Activated CD4-positive, alpha-beta T cell treated with anti-CD3 and anti-CD28 coated beads, Interleukin-2, amount 10 ng/mL, durations not matched to agents 24 days and 14 days (primary cell): ENCODE measurements at regions of chr7 and their contacts with region 1.

Region 1: DNA sequence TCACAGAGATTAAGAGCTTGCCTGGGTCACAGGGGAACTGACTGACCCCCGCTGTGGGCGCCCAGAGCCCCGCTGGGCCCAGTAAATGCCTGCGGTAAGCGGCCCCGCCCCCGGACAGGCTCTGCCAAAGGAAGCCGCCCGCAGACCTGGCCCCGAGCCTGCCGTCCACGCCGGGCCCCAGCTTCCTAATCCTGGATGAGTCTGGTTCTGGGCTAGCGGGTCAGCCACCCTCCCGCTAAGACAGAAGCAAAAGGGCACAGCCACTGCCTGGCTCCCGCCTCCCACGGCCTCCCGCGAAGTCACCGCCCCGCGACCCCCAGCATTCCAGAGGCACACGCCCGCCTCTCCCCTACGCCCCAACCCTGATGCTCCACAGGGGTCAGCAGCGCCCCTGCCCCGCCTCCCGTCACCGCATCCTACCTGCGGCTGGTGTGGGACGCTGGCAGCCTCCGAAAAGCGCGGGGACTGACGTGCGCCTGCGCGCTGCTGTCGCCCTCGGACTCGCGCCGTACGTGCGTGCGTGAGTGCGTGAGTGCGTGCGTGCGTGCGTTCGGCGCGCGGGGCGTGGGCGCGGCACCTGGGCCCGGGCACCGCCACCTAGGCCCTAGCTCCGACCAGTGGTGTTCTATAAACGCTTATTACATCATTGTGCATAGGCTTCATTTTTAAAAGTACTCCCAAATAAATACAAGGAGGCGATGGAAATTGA is at the start of gene FIGNL1:
- DNase-seq: peak; percentile 96
- H3K4me3 Mint-ChIP-seq: peak within 1 kb of the TSS; percentile 95
- H3K27ac Mint-ChIP-seq: peak within 1 kb of the TSS; percentile 80
- H3K4me1 Mint-ChIP-seq: peaks cover 39% of the 10 kb centered on the region
- H3K27me3 Mint-ChIP-seq: peaks cover 7% of the 10 kb centered on the region
- total RNA-seq, gene FIGNL1: 44.7 and 47.4 TPM in 2 replicates

Region 2: DNA sequence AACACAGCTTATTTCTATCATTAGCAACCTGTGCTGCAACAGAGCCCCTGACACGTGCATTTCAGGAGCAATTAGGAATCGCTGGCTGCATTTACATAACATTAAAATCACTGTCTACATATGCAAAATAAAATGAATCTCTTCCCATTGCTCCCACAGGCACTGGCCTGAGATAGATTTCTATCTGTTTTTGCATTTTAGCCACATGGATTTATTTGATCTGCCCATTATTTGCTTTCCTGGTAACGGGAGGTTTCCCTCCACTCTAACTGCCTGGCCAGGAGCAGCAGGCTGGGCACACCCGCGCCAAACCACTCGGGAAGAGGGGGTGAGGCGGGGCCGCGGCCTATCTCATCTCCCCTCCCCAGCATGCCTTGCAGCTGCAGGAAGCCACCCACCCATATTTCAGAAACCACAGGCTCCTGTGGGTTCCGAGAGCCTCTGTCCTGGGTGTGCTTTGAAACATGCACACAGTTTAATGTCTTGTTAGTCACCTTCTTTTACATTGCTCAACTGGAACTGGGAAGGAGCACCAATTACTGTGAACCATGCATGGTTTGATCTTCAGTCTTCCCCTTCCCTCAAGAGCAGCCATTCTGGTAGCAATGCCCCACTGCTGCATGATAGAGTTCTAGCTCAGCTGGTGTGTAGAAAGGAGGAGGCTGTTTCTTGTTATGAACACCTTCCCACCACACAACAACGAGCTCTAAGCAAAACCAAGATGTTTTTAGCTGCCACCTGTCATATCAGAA is 183.2 kb before region 1 on chr7:
- intact Hi-C with region 1: loop called (anchors 5 kb)
- DNase-seq: peak; percentile 95
- H3K4me3 Mint-ChIP-seq: peak overlapping the region; percentile 86
- H3K27ac Mint-ChIP-seq: peak overlapping the region; percentile 95
- H3K4me1 Mint-ChIP-seq: peaks cover 84% of the 10 kb centered on the region
- H3K27me3 Mint-ChIP-seq: no peaks in the 10 kb centered on the region

Region 3: DNA sequence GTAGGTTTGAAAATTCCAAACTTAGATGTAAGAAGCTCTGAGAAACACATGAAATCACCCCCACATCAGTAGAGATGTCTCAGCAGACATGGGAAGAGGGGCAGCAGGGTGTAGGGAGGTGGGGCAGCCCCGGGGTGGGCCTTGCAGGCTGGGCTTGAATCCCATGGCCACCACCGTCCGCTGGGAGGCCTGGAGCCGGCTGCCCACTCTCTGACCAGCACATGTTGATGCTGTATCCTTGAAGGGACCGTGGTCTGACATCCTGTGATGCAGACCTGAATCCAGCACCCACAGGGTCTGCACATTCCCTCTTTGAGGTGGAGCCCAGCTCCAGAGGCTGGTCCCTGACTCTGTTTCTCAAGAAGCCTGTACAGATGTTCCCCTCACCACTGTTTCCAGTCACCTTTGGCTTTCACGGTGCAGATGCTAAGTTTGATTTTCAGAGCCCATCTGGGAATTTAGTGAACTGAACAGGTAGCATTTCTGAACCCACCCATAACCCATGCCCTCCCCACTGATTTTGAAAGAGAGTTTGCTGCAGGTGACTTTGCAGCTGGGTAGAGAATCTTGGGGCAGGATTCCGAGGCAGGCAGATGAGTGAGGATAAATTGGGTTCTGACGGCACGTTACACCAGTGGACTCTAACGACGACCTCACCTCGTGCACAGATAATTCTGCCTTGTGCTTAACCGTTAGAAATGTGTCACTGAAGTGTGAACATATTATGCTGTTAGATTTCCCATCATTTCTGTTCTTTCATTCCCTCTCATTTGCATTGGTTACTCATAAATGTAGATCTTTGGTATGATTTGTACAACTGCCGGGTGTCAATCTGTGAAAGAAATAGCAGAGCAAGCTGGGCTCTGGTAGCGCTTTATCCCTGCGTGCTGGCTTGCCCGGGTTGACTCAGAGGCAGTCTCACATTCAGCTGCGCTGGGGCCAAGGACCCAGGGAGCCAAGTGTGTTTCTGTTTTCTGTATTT is 99.8 kb before region 1 on chr7:
- intact Hi-C with region 1: loop called (anchors 5 kb)
- DNase-seq: peak; percentile 92
- H3K4me3 Mint-ChIP-seq: peak overlapping the region; percentile 76
- H3K27ac Mint-ChIP-seq: peak overlapping the region; percentile 95
- H3K4me1 Mint-ChIP-seq: peaks cover 95% of the 10 kb centered on the region
- H3K27me3 Mint-ChIP-seq: no peaks in the 10 kb centered on the region

Region 4: GRCh38 chr7:50467817-50468610 is 18.0 kb after region 1 on chr7:
- intact Hi-C with region 1: loop called (anchors 2 kb)
- DNase-seq: peak; percentile 94
- H3K4me3 Mint-ChIP-seq: peak overlapping the region; percentile 54
- H3K27ac Mint-ChIP-seq: peak overlapping the region; percentile 62
- H3K4me1 Mint-ChIP-seq: peaks cover 10% of the 10 kb centered on the region
- H3K27me3 Mint-ChIP-seq: peaks cover 18% of the 10 kb centered on the region

Region 5: DNA sequence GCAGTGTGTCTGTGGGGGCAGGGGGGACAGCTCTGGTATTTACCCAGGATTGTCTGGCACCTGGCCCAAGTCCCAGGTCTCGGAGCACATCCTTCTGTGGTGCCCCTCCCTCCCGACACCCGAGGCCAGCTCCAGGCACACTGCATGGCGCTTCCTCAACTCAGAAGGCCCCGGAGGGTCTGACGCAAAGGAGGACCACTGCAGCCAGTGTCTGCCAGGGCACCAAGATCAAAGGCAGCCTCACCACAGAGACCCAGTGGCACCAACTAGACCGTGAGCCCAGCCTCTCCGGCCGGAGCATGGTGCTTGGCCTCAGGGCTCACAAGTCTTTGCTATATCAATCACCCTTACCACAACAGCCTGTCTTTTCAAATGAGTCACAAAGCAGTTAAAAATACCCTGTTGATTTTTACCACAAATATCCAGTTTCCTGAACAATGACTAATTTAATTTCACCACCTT is 214.5 kb after region 1 on chr7:
- intact Hi-C with region 1: loop called (anchors 5 kb)
- DNase-seq: peak; percentile 68
- H3K4me3 Mint-ChIP-seq: no peak overlapping the region
- H3K27ac Mint-ChIP-seq: no peak overlapping the region
- H3K4me1 Mint-ChIP-seq: peaks cover 46% of the 10 kb centered on the region
- H3K27me3 Mint-ChIP-seq: peaks cover 2% of the 10 kb centered on the region